Caki2 (cell line): ENCODE measurements at regions of chr10 and their contacts with region 1.

Region 1: DNA sequence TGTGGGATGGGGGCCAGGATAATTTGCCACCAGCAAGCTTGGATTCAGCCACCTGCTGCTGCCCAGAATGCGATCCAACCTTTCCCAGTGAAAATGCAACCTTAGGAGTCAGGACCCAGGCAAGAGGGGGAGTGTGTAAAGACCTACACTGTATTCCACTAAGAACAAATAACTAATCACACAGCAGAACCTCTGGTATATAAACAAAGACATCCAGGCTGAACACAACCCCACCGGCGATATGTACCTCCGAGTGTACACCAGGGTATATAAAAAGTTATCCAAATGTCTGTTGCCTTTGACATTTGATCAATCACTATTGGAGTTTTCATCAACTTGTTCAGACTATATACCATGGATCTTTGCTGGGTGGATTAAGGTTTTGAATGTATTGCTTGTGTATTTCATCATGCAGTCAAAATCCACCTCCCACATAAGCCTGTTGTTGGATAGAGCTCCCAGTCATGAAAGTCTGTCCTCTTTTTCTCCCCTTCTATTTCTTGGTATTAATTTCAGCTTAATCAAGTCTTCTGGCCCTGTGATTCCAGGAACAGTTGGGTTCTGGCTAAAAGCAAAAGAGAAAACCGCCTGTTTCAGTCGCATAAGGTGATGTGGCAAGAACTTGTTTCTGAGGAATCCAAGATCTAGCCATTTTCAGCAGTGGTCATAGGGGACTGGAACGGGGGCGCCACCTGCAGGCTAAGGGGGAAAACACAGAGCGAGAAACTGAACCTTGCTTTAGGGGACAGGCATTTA is 290.7 kb downstream of the CCDC3 start:
- DNase-seq: peak; percentile 80

Region 2: DNA sequence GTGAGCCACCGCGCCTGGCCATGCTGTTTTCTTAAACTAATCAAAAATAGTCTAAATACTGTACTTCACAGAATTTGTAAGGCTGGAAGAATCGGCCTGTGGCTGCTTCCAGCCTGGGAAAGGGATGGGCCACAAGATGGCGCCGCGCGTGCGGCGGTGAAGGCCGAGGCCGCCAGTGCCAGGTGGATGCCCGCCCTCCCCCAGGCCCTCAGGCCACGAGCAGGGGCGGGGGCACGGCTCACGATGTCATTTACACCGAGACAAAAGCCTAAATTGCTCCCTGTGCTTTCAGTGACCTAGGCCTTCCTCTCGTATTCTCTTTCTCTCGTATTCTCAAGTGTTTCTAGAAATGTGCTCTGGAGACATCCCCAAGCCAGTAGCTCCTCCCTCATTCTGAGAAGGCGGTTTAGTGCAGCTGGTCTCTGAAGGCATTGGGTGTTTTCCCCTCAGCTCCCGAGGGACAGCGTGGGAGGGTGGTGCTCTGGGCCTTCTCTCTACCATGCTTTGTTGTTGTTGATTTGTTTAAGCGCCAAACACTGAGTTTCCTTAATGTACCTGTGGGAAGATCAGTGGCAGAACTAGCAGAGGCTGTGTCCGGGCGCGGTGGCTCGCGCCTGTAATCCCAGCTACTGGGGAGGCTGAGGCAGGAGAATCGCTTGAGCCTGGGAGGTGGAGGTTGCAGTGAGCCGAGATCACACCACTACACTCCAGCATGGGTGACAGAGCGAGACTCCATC is 446.4 kb before region 1 on chr10:
- in situ Hi-C with region 1: loop called (anchors 25 kb)
- DNase-seq: peak; percentile 88

Region 3: DNA sequence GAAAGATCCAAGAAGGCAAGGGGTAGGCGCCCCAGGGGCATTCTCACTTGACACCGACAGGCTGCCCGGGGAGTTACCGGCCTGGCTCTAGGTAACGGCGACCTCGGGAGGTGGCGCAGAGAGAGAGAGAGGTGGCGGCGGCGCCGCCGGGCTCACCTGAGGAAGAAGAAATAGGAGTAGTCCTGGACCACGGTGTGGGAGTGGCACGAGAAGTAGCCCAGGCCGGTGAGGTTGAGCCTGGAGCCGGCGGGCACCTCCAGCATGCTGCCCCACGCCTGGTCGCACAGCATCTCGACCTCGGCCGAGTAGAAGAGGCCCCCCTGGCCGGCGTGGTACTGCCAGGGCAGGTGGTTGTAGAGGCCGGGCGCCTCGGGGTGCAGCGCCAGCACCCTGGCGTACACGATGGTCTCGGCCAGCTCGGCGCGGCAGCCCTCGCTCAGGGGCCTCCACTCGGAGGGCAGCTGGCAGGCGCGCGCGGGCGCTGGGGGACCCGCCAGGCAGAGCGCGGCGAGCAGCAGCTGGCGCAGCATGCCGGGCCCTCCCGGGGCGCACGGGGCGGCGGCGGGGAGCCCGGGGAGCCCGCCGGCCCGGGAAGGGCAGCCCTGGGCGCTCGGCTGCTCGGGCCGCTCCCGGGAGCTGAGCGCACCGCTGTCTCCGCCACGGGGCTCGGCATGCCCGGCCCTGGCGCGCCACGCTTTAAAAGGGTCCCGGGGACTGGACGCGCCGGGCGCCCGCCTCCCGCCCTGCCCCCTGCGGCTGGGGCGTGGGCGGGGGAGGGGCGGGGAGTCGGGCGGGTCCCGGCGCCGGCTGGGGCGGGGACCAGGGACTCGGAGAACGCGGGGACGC is 290.5 kb after region 1 on chr10 and contains the start of gene CCDC3:
- in situ Hi-C with region 1: no loop called
- DNase-seq: no peak
- total RNA-seq, gene CCDC3: not detected in 2 replicates

Region 4: GRCh38 chr10:13074561-13075451 is 364.0 kb after region 1 on chr10:
- in situ Hi-C with region 1: loop called (anchors 25 kb)
- DNase-seq: peak; percentile 58